Activated T-helper 1 cell treated with anti-CD3 and anti-CD28 coated beads, Interleukin-12 subunit alpha, Interleukin-12 subunit beta, Interleukin-2, Interleukin-4 antibody, amounts not matched to agents 30 ng/mL and 10 ng/mL and 1 ng/mL, durations not matched to agents 14 hours and 24 hours and 36 hours (primary cell): ENCODE measurements at regions of chr4 and their contacts with region 1.

Region 1: GRCh38 chr4:98150092-98150761 is 7.0 kb upstream of the STPG2 start:
- DNase-seq: no peak
- H3K4me3 Mint-ChIP-seq: no peak overlapping the region
- H3K27ac Mint-ChIP-seq: no peak overlapping the region
- H3K4me1 Mint-ChIP-seq: peaks cover 6% of the 10 kb centered on the region
- H3K27me3 Mint-ChIP-seq: peaks cover 5% of the 10 kb centered on the region

Region 2: GRCh38 chr4:98113012-98113411 is 37.2 kb before region 1 on chr4:
- intact Hi-C with region 1: no loop called
- DNase-seq: no peak
- H3K4me3 Mint-ChIP-seq: no peak overlapping the region
- H3K27ac Mint-ChIP-seq: no peak overlapping the region
- H3K4me1 Mint-ChIP-seq: no peaks in the 10 kb centered on the region
- H3K27me3 Mint-ChIP-seq: no peaks in the 10 kb centered on the region

Region 3: DNA sequence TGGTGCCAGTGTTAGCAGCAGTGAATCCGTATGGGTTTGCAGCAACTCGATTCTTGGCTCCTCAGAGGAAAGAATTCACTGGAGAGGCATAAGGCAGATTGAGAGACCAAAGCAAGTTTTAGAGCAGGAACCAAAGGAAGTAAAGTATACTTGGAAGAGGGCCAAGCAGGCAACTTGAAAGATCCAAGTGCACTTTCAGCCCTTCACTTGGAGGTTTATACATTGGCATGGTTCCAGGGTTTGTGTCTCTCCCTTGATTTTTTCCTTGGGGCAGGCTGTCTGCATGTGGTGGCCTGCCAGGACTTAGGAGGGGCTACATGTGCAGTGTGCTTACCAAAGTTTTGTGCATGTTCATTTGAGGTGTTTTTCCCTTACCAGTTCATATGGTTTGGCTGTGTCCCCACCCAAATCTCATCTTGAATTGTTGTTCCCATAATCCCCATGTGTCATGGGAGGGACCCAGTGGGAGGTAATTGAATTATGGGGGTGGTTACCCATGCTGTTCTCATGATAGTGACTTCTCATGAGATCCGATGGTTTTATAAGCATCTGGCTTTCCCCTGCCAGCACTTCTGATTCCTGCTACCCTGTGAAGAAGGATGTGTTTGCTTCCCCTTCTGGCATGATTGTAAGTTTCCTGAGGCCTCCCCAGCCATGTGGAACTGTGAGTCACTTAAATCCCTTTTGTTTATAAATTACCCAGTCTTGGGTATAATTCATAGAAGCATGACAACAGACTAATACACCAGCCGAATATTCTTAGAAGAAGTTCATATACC is 594.3 kb after region 1 on chr4:
- intact Hi-C with region 1: no loop called
- DNase-seq: no peak
- H3K4me3 Mint-ChIP-seq: no peak overlapping the region
- H3K27ac Mint-ChIP-seq: no peak overlapping the region
- H3K4me1 Mint-ChIP-seq: peaks cover 5% of the 10 kb centered on the region
- H3K27me3 Mint-ChIP-seq: no peaks in the 10 kb centered on the region

Region 4: DNA sequence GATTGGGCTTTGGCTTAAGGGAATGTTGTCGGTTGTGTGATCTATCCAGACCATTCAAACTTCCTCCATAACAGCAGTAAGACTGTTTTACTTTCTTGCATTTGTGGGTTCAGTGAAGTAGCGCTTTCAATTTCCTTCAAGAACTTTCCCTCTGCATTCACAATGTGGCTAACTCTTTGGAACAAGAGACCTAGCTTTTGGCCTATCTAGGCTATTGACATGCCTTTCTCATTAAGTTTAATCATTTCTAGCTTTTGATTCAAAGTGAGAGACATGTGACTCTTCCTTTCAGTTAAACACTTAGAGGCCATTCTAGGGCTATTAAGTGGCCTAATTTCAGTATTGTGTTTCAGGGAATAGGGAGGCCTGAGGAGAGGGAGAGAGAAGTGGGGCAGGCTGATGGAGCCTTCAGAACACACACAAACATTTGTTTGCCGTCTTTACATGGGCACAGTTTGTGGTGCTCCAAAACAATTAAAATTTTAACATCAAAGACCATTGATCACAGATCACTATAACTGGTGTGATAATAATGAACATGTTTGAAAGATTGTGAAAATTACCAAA is 904.3 kb after region 1 on chr4:
- intact Hi-C with region 1: loop called (anchors 1 kb)
- DNase-seq: no peak
- H3K4me3 Mint-ChIP-seq: no peak overlapping the region
- H3K27ac Mint-ChIP-seq: peak overlapping the region; percentile 7
- H3K4me1 Mint-ChIP-seq: peaks cover 49% of the 10 kb centered on the region
- H3K27me3 Mint-ChIP-seq: no peaks in the 10 kb centered on the region

Region 5: DNA sequence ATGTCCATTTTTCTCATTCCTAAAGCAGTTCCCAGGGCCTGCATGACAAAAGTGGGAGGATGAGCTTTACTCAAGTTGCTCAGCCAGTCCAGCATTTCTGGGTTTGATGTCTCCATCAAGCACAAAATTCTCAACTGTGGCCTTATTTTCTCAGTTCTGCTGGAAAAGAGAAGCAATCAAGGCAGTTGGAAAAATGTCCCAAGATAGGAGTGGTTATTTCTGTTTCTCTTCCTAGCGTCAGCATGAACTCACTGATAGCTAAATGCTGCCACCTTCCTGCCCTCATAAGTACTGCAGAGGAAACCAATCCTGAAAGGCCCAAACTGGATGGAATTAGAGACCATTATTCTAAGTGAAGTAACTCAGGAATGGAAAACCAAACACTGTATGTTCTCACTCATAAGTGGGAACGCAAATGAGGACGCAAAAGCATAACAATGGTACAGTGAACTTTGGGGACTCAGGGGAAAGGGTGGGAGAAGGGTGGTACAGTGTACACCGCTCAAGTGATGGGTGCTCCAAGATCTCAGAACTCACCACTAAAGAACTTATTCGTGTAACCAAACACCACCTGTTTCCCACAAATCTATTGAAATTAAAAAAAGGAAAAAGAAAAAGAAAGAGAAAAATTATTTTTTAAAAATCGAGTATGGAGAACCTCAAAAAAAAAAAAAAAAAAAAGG is 1255.3 kb after region 1 on chr4:
- intact Hi-C with region 1: loop called (anchors 2 kb)
- DNase-seq: peak; percentile 25
- H3K4me3 Mint-ChIP-seq: no peak overlapping the region
- H3K27ac Mint-ChIP-seq: no peak overlapping the region
- H3K4me1 Mint-ChIP-seq: peaks cover 19% of the 10 kb centered on the region
- H3K27me3 Mint-ChIP-seq: peaks cover 11% of the 10 kb centered on the region